Mammary epithelial cell (primary cell): ENCODE measurements at regions of chr9 and their contacts with region 1.

Region 1: DNA sequence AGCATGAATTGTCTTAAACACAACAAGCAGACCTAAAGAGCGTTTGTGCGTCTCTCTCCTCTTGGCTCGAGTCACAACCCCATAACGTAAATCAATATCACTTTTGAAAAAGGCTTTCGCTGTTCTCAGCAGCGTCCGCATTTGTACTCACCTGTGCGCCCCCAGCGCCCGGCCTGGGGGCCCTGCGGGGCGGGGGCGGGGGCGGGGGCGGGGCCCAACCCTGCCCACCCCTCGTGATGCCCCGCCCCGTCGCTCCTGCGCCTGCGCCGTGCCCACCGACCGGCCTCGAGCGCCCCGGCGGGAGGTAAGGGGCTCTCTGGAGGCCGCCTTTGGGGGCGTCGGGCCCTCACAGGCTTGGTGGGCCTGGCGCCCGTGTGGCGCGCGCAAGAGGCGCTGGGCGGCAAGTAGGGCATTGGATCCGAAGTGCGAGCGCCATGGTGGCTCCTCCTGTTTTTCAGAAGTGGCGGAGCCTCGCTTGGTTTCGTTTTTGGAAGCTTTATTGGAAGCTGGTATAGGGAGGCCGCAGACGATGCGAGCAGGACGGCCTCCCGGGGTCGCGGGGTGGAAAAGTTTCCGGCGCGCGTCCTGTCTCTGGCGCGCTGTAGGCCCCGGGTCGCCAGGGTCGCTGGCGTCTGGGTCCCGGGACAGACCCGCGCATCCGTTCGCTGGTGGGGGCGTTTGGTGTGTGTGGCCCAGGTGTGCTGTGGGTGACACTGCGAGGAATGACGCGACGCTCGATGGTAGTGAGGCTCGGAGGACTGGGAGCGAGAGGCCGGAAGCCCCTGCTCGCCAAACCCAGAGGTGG is at the start of gene STX17:
- DNase-seq: peak; percentile 82
- H3K4me3 ChIP-seq: peak within 1 kb of the TSS; percentile 89 to 96 (median 92)
- H3K27ac ChIP-seq: peak within 1 kb of the TSS; percentile 78
- H3K4me1 ChIP-seq: peaks cover 12% of the 10 kb centered on the region
- H3K27me3 ChIP-seq: no peaks in the 10 kb centered on the region
- CTCF ChIP-seq: no peak
- total RNA-seq, gene STX17: 22.0 to 32.1 TPM

Region 2: GRCh38 chr9:99931157-99931840 is 24.7 kb after region 1 on chr9:
- CTCF ChIA-PET with region 1: interaction called, 12 read pairs
- dilution Hi-C with region 1: no loop called
- in situ Hi-C with region 1: no loop called
- intact Hi-C with region 1: no loop called
- DNase-seq: no peak
- H3K4me3 ChIP-seq: no peak overlapping the region
- H3K27ac ChIP-seq: no peak overlapping the region
- H3K4me1 ChIP-seq: peaks cover 4% of the 10 kb centered on the region
- H3K27me3 ChIP-seq: no peaks in the 10 kb centered on the region
- CTCF ChIP-seq: no peak